Astrocyte of the cerebellum (primary cell): ENCODE measurements at regions of chr2 and their contacts with region 1.

Region 1: DNA sequence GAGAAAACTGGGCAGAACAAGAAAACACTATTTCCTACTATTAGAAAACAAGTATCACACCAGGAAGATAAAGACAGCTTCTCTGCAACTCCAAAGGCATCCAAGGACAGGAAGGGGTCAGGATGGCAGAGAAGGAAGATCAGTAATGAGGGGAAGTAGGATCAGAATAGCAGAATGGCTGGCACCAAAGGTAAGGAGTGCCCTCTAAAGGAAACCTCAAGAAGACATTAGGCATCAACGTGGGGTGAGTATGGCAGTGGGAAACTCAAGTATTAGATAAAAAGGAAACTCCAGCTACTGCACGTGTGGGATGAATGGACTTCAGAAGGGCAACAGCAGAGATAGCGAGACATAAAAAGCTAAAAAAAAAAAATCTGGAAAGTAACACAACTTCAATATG is 25.9 kb downstream of the HDLBP start:
- DNase-seq: no peak
- H3K4me3 ChIP-seq: no peak overlapping the region
- CTCF ChIP-seq: no peak

Region 2: GRCh38 chr2:241224018-241224850 is 65.4 kb before region 1 on chr2:
- in situ Hi-C with region 1: loop called (anchors 10 kb)
- DNase-seq: no peak
- H3K4me3 ChIP-seq: no peak overlapping the region
- CTCF ChIP-seq: no peak